Kidney (tissue), 22 donors: ENCODE measurements at regions of chr10 and their contacts with region 1.

Region 1: DNA sequence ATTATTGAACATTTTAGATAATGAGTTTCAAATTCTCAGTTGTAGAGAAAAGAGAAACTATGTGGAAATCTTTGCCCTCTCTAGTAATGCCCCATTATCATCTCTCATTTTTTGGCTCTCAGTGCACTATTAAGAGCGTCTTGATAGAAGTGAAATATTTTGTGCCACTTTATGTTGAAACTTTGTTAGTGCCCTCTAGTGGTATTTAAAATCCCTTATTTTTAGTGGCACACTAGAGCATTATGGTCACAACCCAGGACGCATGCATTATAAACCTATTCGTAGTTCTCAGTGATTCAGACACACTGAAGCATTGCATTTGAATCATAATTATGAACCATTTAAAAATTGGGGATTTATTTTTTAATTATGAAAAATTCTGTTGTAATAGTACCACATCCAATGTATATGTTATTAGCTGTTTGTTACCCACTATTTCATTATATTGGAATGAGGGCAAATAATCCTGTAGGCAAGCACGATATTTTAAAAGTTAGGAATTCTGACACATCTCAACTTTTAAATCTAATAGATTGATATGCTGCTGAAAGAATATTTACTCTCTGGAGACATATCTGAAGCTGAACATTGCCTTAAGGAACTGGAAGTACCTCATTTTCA is 21.9 kb downstream of the PDCD4 start:
- DNase-seq: peak in 2 of 5 donors; percentile 60 to 68
- H3K4me3 ChIP-seq: no peak overlapping the region
- H3K27ac ChIP-seq: no peak overlapping the region
- H3K4me1 ChIP-seq: no peaks in the 10 kb centered on the region
- H3K27me3 ChIP-seq: no peaks in the 10 kb centered on the region
- CTCF ChIP-seq: peak; percentile 44

Region 2: DNA sequence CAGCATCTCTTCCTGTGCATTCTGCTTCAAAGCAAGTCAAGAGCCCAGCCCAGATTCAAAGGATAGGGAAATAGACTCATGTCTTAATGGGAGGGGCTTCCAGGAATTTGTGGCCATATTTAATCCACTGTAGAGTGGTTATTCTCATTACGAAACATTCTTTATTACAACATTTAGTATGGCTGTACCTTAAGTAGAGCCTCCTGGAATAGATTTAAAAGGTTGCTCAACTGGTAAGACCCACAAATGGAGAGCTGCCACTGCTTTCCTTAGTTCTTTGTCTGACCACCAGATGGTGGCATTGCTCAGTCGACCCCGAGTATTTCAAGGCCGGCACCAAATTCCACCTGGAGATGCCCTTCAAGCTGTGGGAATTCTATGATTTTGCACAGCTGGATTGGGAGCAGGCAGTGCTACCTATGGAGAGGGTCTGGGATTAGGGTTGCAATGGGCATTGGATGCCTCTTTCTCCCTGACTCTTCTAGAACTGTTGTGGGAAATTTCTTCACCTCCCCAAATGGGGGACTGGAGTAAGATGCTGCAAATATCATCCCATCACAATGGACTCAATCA is 147.3 kb before region 1 on chr10:
- intact Hi-C with region 1: loop called (anchors 10 kb)
- DNase-seq: peak in 4 of 5 donors; percentile 77 to 85 (median 80)
- H3K4me3 ChIP-seq: no peak overlapping the region
- H3K27ac ChIP-seq: no peak overlapping the region
- H3K4me1 ChIP-seq: no peaks in the 10 kb centered on the region
- H3K27me3 ChIP-seq: no peaks in the 10 kb centered on the region
- CTCF ChIP-seq: peak; percentile 71

Region 3: DNA sequence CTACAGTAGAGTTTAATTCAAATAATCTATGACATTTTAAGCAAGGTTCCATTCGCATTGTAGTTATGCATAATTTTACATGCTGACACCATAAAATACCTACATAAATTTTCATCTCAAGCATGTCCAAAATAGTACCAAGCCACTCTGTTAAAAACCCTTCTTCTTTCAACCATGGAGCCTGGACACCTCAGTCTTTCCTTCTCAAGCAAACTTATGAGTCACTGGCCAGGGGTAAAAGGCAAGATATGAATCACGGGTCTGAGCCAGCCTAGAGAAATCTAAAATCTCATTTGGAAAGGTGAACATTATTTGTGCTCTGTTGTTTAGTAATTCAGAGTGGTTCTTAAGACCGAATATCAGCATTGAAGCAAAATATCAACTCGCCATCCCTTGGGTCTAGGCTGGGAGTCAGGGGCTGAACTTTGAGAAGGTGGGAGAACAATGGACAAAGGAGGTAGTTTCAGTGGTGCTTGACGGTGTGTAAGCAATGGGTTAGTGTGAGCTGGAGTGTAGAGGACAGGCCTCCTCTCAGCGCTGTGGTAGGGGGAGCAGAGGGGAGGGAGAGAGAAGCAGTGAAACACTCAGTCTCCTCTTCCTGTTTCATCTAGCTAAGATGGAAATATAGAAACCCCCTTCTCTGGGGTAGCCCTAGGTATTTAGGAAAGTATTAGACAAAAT is 1309.0 kb after region 1 on chr10:
- intact Hi-C with region 1: no loop called
- DNase-seq: no peak
- H3K4me3 ChIP-seq: no peak overlapping the region
- H3K27ac ChIP-seq: peak overlapping the region in 1 of 2 donors; percentile 14
- H3K4me1 ChIP-seq: peaks cover 0 to 4% (median 2%) of the 10 kb centered on the region in 3 donors
- H3K27me3 ChIP-seq: no peaks in the 10 kb centered on the region
- CTCF ChIP-seq: no peak